Endothelial cell of umbilical vein (primary cell): ENCODE measurements at regions of chr3 and their contacts with region 1.

Region 1: DNA sequence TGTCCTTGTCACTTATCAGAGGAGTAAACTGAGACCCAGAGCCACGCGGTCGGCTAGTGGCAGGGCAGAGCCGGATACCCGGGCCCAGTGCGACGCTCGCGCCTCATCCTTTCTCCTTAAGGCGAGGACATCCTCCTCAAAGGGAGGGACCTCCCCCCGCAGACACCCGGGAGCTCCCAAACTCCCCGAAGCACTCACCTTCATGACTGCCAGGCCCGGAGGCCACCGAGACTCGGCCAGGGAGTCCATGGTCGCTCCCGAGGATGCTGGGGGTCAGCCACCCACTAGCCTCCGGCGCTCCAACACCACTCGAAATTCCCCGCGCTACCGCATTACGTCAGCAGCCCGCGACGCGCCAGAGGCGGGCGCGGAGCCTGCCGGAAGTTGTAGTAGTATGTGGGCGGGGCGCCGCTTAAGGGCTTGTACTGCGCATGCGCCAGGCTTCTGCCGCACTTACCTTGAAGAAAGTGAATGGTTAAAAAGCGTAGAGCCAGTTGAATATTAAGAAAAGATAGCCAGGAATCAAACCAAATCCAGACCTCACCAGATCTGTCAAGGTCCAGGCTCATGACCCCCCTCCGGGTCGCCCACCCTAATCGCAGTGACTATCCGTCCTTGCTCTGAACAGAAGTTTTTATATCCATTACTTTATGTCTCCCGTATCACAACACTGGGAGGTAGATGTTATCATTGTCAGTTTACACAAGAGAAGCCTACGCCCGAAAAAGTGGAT is at the start of gene RAD18:
- DNase-seq: peak; percentile 91
- H3K4me3 ChIP-seq: peak within 1 kb of the TSS; percentile 74 to 92 (median 91)
- H3K27ac ChIP-seq: peak within 1 kb of the TSS; percentile 67
- H3K4me1 ChIP-seq: peaks cover 29% of the 10 kb centered on the region
- H3K27me3 ChIP-seq: peaks cover 0 to 2% of the 10 kb centered on the region in 2 experiments
- CTCF ChIP-seq: no peak
- POLR2A ChIP-seq: peak; percentile 70
- total RNA-seq, gene RAD18: 16.7 and 23.8 TPM in 2 replicates

Region 2: DNA sequence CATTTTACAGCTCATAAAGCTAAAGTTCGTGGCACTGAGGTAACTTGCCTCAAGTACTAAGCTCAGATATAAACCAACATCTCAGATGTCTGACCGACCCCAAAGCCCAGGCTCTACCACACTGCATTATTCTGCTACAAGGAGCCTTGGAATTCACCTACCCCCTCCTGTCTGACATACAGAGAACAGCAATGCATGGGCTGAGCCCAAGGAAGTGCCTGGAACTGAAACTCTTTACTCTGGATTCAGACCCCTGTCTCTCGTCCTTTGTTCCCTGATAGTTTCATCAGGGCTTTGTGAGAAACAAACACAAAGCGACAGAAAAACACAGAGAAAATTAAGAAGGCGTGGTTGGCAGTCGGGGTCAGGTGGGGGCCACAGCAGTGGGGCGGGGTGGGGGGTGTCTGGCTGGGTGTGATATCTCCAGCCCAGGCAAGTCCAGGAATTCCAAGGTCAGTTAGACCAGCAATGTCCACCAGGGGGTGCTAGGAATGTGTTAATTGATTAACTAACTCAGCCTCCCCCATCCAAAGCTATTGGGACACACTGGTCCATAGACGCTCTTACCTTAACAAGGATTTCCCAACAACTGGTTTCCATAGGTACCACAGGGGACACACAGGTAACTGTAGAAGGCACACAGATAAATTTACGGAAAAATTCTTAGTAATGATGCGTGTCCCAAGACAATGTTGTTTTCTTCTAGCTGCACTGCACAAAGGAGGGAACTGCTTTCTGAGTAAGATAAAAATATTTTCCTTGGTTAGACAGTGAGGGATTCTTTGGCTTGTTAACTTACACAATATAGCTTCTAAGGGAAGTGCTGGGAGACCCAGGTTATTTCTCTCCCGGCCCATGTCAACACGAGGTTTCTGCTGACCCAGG is 299.9 kb before region 1 on chr3:
- CTCF ChIA-PET with region 1: no interaction called
- POLR2A ChIA-PET with region 1: no interaction called
- dilution Hi-C with region 1: no loop called
- intact Hi-C with region 1: loop called (anchors 10 kb)
- DNase-seq: peak; percentile 66
- H3K4me3 ChIP-seq: no peak overlapping the region
- H3K27ac ChIP-seq: no peak overlapping the region
- H3K4me1 ChIP-seq: peaks cover 4% of the 10 kb centered on the region
- H3K27me3 ChIP-seq: peaks cover 0 to 8% of the 10 kb centered on the region in 2 experiments
- CTCF ChIP-seq: peak; percentile 52 to 67
- POLR2A ChIP-seq: no peak

Region 3: DNA sequence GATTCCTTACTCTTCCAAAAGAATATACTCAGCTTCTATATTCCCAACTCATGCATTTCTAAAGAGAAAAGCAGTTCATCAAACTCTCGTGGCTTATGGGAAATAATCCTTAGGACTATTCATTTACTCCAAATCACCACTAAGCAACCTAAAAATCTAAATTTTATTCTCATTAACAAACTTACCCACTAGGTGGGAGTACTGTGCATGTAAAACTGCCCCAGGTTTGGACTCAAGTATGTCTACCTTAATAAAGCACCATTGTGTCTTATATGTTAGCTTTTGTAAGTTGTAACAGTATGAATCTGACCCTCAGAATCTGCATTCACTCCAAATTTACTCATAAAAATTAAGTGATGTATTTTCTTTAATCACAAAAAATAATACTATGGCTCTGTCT is 25.3 kb before region 1 on chr3:
- CTCF ChIA-PET with region 1: no interaction called
- POLR2A ChIA-PET with region 1: no interaction called
- dilution Hi-C with region 1: no loop called
- intact Hi-C with region 1: loop called (anchors 1 kb)
- DNase-seq: peak; percentile 61
- H3K4me3 ChIP-seq: no peak overlapping the region
- H3K27ac ChIP-seq: peak overlapping the region; percentile 87
- H3K4me1 ChIP-seq: peaks cover 21% of the 10 kb centered on the region
- H3K27me3 ChIP-seq: no peaks in the 10 kb centered on the region
- CTCF ChIP-seq: peak; percentile 19 to 32
- POLR2A ChIP-seq: no peak

Region 4: GRCh38 chr3:8945890-8946600 is 17.3 kb before region 1 on chr3:
- CTCF ChIA-PET with region 1: no interaction called
- POLR2A ChIA-PET with region 1: no interaction called
- dilution Hi-C with region 1: no loop called
- intact Hi-C with region 1: loop called (anchors 1 kb)
- DNase-seq: no peak
- H3K4me3 ChIP-seq: no peak overlapping the region
- H3K27ac ChIP-seq: no peak overlapping the region
- H3K4me1 ChIP-seq: no peaks in the 10 kb centered on the region
- H3K27me3 ChIP-seq: no peaks in the 10 kb centered on the region
- CTCF ChIP-seq: no peak
- POLR2A ChIP-seq: no peak

Region 5: GRCh38 chr3:8987645-8988383 is 24.5 kb after region 1 on chr3:
- CTCF ChIA-PET with region 1: interaction called, 10 read pairs
- POLR2A ChIA-PET with region 1: no interaction called
- dilution Hi-C with region 1: no loop called
- intact Hi-C with region 1: no loop called
- DNase-seq: peak; percentile 67
- H3K4me3 ChIP-seq: no peak overlapping the region
- H3K27ac ChIP-seq: no peak overlapping the region
- H3K4me1 ChIP-seq: no peaks in the 10 kb centered on the region
- H3K27me3 ChIP-seq: no peaks in the 10 kb centered on the region
- CTCF ChIP-seq: peak; percentile 70 to 88
- POLR2A ChIP-seq: no peak

Region 6: GRCh38 chr3:9649791-9650521 is 686.7 kb after region 1 on chr3:
- CTCF ChIA-PET with region 1: no interaction called
- POLR2A ChIA-PET with region 1: no interaction called
- dilution Hi-C with region 1: no loop called
- intact Hi-C with region 1: loop called (anchors 1 kb)
- DNase-seq: no peak
- H3K4me3 ChIP-seq: peak overlapping the region; percentile 50 to 80 (median 77)
- H3K27ac ChIP-seq: peak overlapping the region; percentile 34
- H3K4me1 ChIP-seq: peaks cover 5% of the 10 kb centered on the region
- H3K27me3 ChIP-seq: no peaks in the 10 kb centered on the region
- CTCF ChIP-seq: no peak
- POLR2A ChIP-seq: no peak

Region 7: DNA sequence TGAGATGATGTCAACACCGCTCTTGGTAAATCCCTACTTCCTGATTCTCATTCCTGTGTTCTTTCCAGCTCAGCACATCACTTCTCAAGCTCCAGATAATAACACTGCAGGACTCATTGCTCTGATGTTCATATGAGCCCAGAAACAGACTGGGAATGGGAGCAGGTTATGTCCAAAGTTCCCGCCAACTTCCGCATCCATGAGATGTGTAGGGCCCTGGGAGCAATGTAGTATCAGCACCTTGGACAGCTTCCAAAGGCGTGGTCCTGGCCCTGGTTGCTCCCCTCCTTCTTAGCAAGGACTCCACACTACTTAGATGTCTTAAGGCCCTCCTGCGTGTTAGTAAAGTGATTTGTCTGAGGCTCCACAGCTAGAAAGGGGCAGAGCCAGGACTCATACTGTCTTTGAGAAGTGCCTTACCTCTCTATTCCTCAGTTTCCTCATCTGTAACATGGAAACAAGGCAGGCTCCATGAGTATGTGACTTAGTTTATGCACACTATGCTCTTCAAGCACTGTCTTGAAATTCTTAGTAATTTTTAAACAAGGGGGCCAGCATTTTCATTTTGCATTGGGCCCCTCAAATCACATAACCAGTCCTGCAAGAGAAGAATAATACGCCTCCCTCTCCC is 2001.3 kb after region 1 on chr3:
- CTCF ChIA-PET with region 1: no interaction called
- POLR2A ChIA-PET with region 1: no interaction called
- dilution Hi-C with region 1: no loop called
- intact Hi-C with region 1: loop called (anchors 5 kb)
- DNase-seq: peak; percentile 15
- H3K4me3 ChIP-seq: no peak overlapping the region
- H3K27ac ChIP-seq: no peak overlapping the region
- H3K4me1 ChIP-seq: no peaks in the 10 kb centered on the region
- H3K27me3 ChIP-seq: no peaks in the 10 kb centered on the region
- CTCF ChIP-seq: no peak
- POLR2A ChIP-seq: no peak